H1 (cell line): ENCODE measurements at regions of chr14 and their contacts with region 1.

Region 1: DNA sequence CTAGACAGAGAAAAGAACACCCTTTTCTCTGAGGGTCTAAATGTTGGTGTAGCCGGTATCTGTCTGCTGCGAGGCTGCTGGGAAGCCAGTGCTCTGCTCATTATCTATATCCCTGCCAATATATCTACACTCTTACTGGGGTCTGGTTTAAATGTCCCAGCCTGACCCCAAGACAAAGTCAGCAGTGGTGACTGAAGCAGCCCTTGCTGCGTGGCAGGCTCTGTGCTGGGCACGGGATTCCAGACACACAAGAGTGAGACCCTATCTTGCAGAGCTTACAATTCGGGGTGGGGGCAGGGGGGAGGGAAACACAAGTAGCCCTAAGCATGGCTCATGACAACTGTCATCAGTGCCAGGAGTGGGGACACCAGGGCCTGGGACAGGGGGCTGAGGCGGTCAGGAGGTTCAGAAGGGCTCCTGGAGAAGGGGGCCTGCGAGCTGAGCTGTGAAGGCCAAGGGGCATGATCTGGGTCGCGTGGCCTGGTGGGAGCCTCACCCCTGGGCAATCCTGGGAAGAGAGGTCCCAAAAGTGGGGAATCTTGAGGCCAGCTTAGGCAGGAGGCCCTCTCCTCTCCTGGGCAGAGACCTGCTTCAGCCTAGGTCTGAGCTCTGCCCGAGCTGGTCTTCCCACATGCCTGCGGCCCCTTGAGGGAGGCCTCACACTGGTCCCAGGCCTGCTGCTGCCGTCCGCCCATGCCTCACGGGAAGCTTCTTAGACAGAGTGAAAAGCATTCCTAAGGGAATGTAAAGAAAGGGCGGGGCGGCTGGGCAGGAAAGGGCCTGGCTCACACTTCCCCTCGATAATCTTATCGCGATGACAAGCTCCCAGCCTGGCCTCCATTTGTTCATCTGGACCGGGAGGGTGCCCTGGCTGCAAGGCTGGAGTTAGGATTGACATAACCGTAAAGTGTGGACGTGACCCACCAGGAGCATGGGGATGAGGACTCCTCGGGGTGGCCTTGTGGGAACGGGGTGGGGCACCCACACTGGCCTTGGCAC is 7.3 kb upstream of the RCOR1 start:
- DNase-seq: peak in 1 of 2 experiments; percentile 67
- H3K4me3 ChIP-seq: no peak overlapping the region
- H3K27ac ChIP-seq: no peak overlapping the region
- H3K4me1 ChIP-seq: peaks cover 0 to 18% (median 10%) of the 10 kb centered on the region in 4 experiments; a peak in 6 of 7 replicates
- H3K27me3 ChIP-seq: no peaks in the 10 kb centered on the region
- CTCF ChIP-seq: no peak
- EP300 ChIP-seq: no peak
- POLR2A ChIP-seq: peak in 1 of 2 experiments; percentile 57; a peak in 1 of 3 replicates
- RAD21 ChIP-seq: peak in 1 of 2 experiments; percentile 8; a peak in 1 of 4 replicates

Region 2: GRCh38 chr14:102474934-102475333 is 110.2 kb before region 1 on chr14:
- CTCF ChIA-PET with region 1: no interaction called
- POLR2A ChIA-PET with region 1: no interaction called
- DNase-seq: no peak
- H3K4me3 ChIP-seq: no peak overlapping the region
- H3K27ac ChIP-seq: no peak overlapping the region
- H3K4me1 ChIP-seq: no peaks in the 10 kb centered on the region
- H3K27me3 ChIP-seq: no peaks in the 10 kb centered on the region
- CTCF ChIP-seq: no peak
- EP300 ChIP-seq: no peak
- POLR2A ChIP-seq: no peak
- RAD21 ChIP-seq: no peak

Region 3: DNA sequence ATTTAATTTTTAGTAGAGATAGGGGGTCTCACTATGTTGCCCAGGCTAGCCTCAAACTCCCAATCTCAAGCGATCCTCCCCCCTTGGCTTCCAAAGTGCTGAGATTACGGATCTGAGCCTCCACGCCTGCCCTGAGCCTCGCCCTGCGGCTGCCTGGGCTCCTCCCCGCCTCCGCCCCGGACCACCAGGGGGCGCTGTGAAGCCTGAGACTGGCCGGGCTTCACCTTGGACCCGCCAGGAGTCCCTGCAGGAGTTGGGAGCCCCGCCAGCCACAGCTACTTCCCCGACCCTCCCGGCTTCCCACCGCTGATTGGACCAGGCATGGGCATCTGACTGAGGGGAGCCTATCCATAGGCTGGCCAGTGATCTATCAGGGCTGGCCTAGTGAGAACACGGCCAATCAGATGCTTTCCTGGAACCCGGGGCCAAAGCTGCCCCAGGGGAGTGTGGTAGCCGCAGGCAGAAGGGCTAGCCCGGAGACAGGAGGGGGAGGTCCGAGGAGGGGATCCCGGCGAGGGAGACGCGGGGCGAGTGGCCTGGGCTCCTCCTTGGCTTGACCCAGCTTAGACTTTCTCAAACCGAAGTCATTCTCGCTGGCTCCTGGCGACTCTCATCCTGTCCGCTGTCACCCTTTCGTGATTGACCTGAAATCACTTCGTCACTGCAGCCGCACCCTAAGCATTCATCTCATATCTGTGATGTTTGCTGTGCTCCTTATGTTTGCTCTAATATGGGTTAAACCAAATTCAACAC is 60.5 kb before region 1 on chr14:
- CTCF ChIA-PET with region 1: interaction called, 11 read pairs
- POLR2A ChIA-PET with region 1: no interaction called
- DNase-seq: peak; percentile 99 to 100
- H3K4me3 ChIP-seq: peak overlapping the region; percentile 33 to 67 (median 49); a peak in 7 of 8 replicates
- H3K27ac ChIP-seq: no peak overlapping the region
- H3K4me1 ChIP-seq: peaks cover 0 to 10% (median 0%) of the 10 kb centered on the region in 4 experiments; a peak in 2 of 7 replicates
- H3K27me3 ChIP-seq: no peaks in the 10 kb centered on the region
- CTCF ChIP-seq: peak; percentile 89 to 97 (median 91)
- EP300 ChIP-seq: no peak; a peak in 1 of 3 replicates
- POLR2A ChIP-seq: peak in 1 of 2 experiments; percentile 70; a peak in 2 of 3 replicates
- RAD21 ChIP-seq: peak; percentile 82 to 90

Region 4: GRCh38 chr14:102539580-102540314 is 45.4 kb before region 1 on chr14:
- CTCF ChIA-PET with region 1: interaction called, 13 read pairs
- POLR2A ChIA-PET with region 1: interaction called, 4 read pairs
- DNase-seq: no peak
- H3K4me3 ChIP-seq: no peak overlapping the region
- H3K27ac ChIP-seq: no peak overlapping the region
- H3K4me1 ChIP-seq: peaks cover 0 to 12% (median 7%) of the 10 kb centered on the region in 4 experiments; a peak in 6 of 7 replicates
- H3K27me3 ChIP-seq: peaks cover 0 to 5% (median 2%) of the 10 kb centered on the region in 4 experiments; a peak in 4 of 7 replicates
- CTCF ChIP-seq: no peak
- EP300 ChIP-seq: no peak
- POLR2A ChIP-seq: no peak
- RAD21 ChIP-seq: no peak

Region 5: DNA sequence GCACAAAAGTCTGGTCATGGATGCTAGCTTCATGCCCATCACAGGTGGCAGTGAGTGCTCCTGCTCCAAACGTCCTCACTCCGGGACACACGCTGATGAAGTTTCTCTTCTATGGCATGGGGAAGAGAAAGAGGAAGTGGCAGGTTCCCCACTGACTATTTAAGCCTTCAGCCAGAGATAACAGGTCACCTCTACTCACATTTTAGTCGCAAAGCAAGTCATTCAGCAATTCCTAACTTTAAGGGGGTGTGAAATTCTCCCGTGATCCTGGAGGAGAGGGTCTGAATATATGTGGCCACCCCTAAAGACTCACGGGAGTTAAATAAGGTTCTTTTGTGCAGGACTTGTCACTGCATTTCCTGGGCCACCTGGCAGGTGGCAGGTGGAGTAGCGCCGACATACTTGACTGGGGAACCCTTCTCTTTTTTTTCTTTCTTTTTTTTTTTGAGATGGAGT is 11.6 kb before region 1 on chr14:
- CTCF ChIA-PET with region 1: interaction called, 14 read pairs
- POLR2A ChIA-PET with region 1: interaction called, 11 read pairs
- DNase-seq: no peak
- H3K4me3 ChIP-seq: no peak overlapping the region
- H3K27ac ChIP-seq: no peak overlapping the region
- H3K4me1 ChIP-seq: peaks cover 0 to 4% (median 1%) of the 10 kb centered on the region in 4 experiments; a peak in 3 of 7 replicates
- H3K27me3 ChIP-seq: no peaks in the 10 kb centered on the region
- CTCF ChIP-seq: no peak
- EP300 ChIP-seq: no peak
- POLR2A ChIP-seq: no peak
- RAD21 ChIP-seq: no peak